A549 (cell line): ENCODE measurements at regions of chr14 and their contacts with region 1.

Region 1: GRCh38 chr14:36941783-36942521 is 230.5 kb downstream of the SLC25A21 start:
- DNase-seq: peak; percentile 34 to 75
- ATAC-seq: peak; percentile 91 to 95
- H3K4me3 ChIP-seq: no peak overlapping the region
- H3K27ac ChIP-seq: no peak overlapping the region
- H3K4me1 ChIP-seq: peaks cover 20% of the 10 kb centered on the region; the same call in 2 of the 3 replicates
- CTCF ChIP-seq: peak; percentile 87
- EP300 ChIP-seq: no peak
- POLR2A ChIP-seq: no peak
- RAD21 ChIP-seq: peak; percentile 89 to 90

Region 2: GRCh38 chr14:36931796-36932195 is 10.2 kb before region 1 on chr14:
- CTCF ChIA-PET with region 1: interaction called, 27 read pairs
- POLR2A ChIA-PET with region 1: no interaction called
- DNase-seq: no peak
- ATAC-seq: no peak
- H3K4me3 ChIP-seq: no peak overlapping the region
- H3K27ac ChIP-seq: no peak overlapping the region
- H3K4me1 ChIP-seq: peaks cover 14% of the 10 kb centered on the region; the same call in 2 of the 3 replicates
- CTCF ChIP-seq: no peak
- EP300 ChIP-seq: no peak
- POLR2A ChIP-seq: no peak
- RAD21 ChIP-seq: no peak

Region 3: GRCh38 chr14:36952717-36953116 is 10.8 kb after region 1 on chr14:
- CTCF ChIA-PET with region 1: interaction called, 23 read pairs
- POLR2A ChIA-PET with region 1: no interaction called
- DNase-seq: peak; percentile 24 to 64
- ATAC-seq: peak in 1 of 2 experiments; percentile 78; a peak in 3 of 6 replicates
- H3K4me3 ChIP-seq: no peak overlapping the region
- H3K27ac ChIP-seq: no peak overlapping the region
- H3K4me1 ChIP-seq: peaks cover 11% of the 10 kb centered on the region; the same call in 2 of the 3 replicates
- CTCF ChIP-seq: no peak
- EP300 ChIP-seq: no peak
- POLR2A ChIP-seq: no peak
- RAD21 ChIP-seq: no peak

Region 4: DNA sequence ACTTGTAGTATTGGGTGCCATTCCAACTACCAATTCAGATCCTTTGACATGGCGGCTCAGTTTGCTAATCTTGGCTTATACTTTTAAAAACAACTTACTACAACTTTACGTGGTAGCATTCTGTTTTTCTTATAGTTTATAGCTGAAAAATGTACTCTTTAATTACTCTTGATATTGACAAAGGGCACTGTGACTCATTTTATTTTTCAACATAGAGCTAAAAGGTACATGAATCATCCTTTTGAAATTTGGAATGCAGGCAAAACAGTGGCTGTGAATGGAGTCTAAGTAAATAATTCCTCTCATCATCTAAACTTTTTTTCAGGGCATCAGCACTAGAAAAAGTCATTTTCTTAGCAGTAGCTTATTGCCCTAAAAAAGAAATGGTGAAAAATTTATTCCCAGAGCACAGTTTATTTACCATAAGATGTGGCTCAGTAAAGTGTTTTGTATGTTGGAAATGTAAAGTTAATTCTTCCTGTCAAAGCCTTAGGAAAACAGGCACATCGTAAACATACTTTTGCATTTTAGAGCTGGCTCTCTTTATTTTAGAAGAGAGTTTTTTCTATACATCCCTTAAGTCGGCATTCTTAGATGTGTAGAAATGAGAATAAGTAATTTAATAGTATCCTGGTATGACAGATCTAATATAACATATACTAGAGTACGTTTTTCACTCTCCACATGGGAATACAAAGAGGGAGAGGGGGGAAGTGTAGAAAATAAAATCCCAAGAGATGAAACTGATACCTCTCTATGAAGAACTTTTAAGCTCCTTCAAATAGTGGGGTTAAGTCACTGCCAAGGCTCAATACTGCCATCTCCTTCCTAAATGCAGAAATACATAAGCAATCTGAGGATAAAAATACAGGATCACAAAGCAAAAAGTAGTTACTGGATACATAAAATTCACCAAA is 175.2 kb after region 1 on chr14:
- CTCF ChIA-PET with region 1: interaction called, 17 read pairs
- POLR2A ChIA-PET with region 1: no interaction called
- DNase-seq: peak; percentile 40 to 74
- ATAC-seq: peak; percentile 71 to 84
- H3K4me3 ChIP-seq: no peak overlapping the region; the same call in 2 of the 3 replicates
- H3K27ac ChIP-seq: peak overlapping the region; percentile 20 to 42; a peak in 1 of 6 replicates
- H3K4me1 ChIP-seq: peaks cover 21% of the 10 kb centered on the region; the same call in 2 of the 3 replicates
- CTCF ChIP-seq: peak; percentile 65
- EP300 ChIP-seq: no peak
- POLR2A ChIP-seq: no peak
- RAD21 ChIP-seq: peak; percentile 76 to 81